ENCODE measurements at regions of chr2 and their contacts with region 1.

Region 1: GRCh38 chr2:147641652-147642051 is 203.2 kb upstream of the ACVR2A start:
- DNase-seq: no peak
- H3K4me3 ChIP-seq: no peak overlapping the region
- H3K27ac ChIP-seq: no peak overlapping the region
- H3K4me1 ChIP-seq: no peaks in the 10 kb centered on the region
- H3K27me3 ChIP-seq: no peaks in the 10 kb centered on the region
- CTCF ChIP-seq: no peak
- POLR2A ChIP-seq: no peak

Region 2: GRCh38 chr2:145677371-145677770 is 1964.3 kb before region 1 on chr2:
- intact Hi-C with region 1: no loop called
- DNase-seq: no peak
- H3K4me3 ChIP-seq: no peak overlapping the region
- H3K27ac ChIP-seq: no peak overlapping the region
- H3K4me1 ChIP-seq: no peaks in the 10 kb centered on the region
- H3K27me3 ChIP-seq: no peaks in the 10 kb centered on the region
- CTCF ChIP-seq: no peak
- POLR2A ChIP-seq: no peak

Region 3: GRCh38 chr2:147621656-147622197 is 19.9 kb before region 1 on chr2:
- intact Hi-C with region 1: loop called (anchors 1 kb)
- DNase-seq: no peak
- H3K4me3 ChIP-seq: no peak overlapping the region
- H3K27ac ChIP-seq: no peak overlapping the region
- H3K4me1 ChIP-seq: no peaks in the 10 kb centered on the region
- H3K27me3 ChIP-seq: no peaks in the 10 kb centered on the region
- CTCF ChIP-seq: no peak
- POLR2A ChIP-seq: no peak

Region 4: GRCh38 chr2:148582679-148583511 is 941.2 kb after region 1 on chr2:
- intact Hi-C with region 1: no loop called
- DNase-seq: no peak
- H3K4me3 ChIP-seq: no peak overlapping the region
- H3K27ac ChIP-seq: no peak overlapping the region
- H3K4me1 ChIP-seq: no peaks in the 10 kb centered on the region
- H3K27me3 ChIP-seq: no peaks in the 10 kb centered on the region
- CTCF ChIP-seq: no peak
- POLR2A ChIP-seq: no peak

Region 5: DNA sequence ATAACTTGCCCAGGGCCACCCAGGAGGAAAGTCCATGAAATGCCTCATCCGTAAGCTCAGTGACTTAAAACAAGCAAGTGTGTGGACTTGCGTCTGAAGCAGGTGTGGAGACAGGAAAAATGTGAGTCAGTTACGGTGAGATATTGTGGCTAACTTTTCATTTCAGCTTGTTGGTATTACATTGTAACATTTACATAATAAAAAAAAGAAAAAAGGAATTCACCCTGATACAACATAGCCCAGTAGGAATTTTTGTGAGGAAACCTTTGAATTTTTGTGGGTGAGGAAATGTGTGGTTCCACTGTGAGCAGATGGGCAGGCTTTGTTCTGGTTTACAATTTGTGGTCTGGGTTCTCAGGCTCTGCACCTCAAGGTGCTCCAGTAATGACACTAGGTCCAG is 1363.2 kb after region 1 on chr2:
- intact Hi-C with region 1: no loop called
- DNase-seq: no peak
- H3K4me3 ChIP-seq: peak overlapping the region in 1 of 3 donors; percentile 8
- H3K27ac ChIP-seq: peak overlapping the region; percentile 46 to 84
- H3K4me1 ChIP-seq: peaks cover 8 to 19% of the 10 kb centered on the region in 2 donors
- H3K27me3 ChIP-seq: no peaks in the 10 kb centered on the region
- CTCF ChIP-seq: no peak
- POLR2A ChIP-seq: no peak

Measured in breast epithelium (tissue), 4 donors.